ENCODE measurements at regions of chr1 and their contacts with region 1.

Region 1: GRCh38 chr1:167220537-167221125 is at the start of gene POU2F1:
- DNase-seq: peak; percentile 98
- H3K4me3 ChIP-seq: peak within 1 kb of the TSS; percentile 82
- H3K27ac ChIP-seq: peak within 1 kb of the TSS; percentile 94
- H3K4me1 ChIP-seq: peaks cover 29% of the 10 kb centered on the region
- CTCF ChIP-seq: peak; percentile 79
- total RNA-seq, gene POU2F1: 18.7 and 21.2 TPM in 2 replicates

Region 2: GRCh38 chr1:166875734-166876539 is 344.7 kb before region 1 on chr1 and contains the start of gene TADA1:
- CTCF ChIA-PET with region 1: no interaction called
- POLR2A ChIA-PET with region 1: interaction called, 5 read pairs
- intact Hi-C with region 1: loop called (anchors 2 kb)
- DNase-seq: peak; percentile 99
- H3K4me3 ChIP-seq: peak within 1 kb of the TSS; percentile 86
- H3K27ac ChIP-seq: peak within 1 kb of the TSS; percentile 69
- H3K4me1 ChIP-seq: peaks cover 17% of the 10 kb centered on the region
- CTCF ChIP-seq: no peak
- total RNA-seq, gene TADA1: 14.9 and 16.9 TPM in 2 replicates

Region 3: DNA sequence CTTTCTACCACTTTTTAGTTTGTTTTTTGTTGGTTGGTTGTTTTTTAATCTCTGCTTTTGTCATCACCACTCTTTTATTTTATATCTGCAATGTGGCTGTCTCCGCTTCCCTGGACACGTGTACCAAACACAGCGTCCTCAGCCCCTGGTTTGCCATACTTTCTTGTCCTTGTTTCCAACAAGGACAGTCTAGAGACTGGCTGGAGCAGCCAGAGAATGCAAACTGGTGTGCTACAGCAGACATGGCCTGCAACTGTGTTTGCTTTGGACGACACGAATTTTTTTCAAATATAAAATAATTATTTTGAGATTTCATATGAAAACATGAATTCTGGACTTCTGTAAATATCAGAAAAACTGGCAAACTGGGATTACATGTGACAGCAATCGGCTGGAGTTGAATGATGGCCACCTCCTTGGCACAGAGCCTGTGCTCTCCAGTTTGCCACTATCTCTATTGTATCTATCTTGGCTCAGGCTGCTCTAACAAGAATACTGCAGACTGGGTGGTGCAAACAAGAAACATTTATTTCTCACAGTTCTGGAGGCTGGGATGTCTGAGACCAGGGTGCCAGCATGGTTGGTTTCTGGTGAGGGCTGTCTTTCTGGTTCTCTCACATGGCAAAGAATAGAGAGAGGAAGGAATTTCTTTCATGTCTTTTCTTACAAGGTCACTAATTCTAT is 34.5 kb before region 1 on chr1:
- CTCF ChIA-PET with region 1: no interaction called
- POLR2A ChIA-PET with region 1: no interaction called
- intact Hi-C with region 1: no loop called
- DNase-seq: no peak
- H3K4me3 ChIP-seq: no peak overlapping the region
- H3K27ac ChIP-seq: no peak overlapping the region
- H3K4me1 ChIP-seq: no peaks in the 10 kb centered on the region
- CTCF ChIP-seq: no peak

Region 4: GRCh38 chr1:167314671-167315070 is 94.0 kb after region 1 on chr1:
- CTCF ChIA-PET with region 1: no interaction called
- POLR2A ChIA-PET with region 1: no interaction called
- intact Hi-C with region 1: no loop called
- DNase-seq: no peak
- H3K4me3 ChIP-seq: no peak overlapping the region
- H3K27ac ChIP-seq: no peak overlapping the region
- H3K4me1 ChIP-seq: no peaks in the 10 kb centered on the region
- CTCF ChIP-seq: no peak

Region 5: DNA sequence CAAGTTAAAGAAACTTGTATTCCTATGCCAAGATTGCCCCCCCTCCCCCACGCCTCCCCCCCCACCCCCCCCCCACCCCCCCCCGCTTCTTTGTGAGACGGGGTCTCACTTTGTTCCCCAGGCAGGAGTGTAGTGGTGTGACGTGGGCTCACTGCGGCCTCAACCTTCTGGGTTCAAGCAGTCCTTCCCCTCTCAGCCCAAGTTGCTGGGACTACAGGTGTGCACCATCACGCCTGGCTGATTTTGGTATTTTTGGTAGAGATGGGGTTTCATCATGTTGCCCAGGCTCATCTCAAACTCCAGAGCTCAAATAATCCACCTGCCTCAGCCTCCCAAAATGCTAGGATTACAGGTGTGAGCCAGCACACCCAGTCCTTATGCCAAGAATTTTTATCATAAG is 136.7 kb after region 1 on chr1:
- CTCF ChIA-PET with region 1: interaction called, 3 read pairs
- POLR2A ChIA-PET with region 1: interaction called, 3 read pairs
- intact Hi-C with region 1: loop called (anchors 2 kb)
- DNase-seq: peak; percentile 95
- H3K4me3 ChIP-seq: peak overlapping the region; percentile 57
- H3K27ac ChIP-seq: peak overlapping the region; percentile 100
- H3K4me1 ChIP-seq: peaks cover 83% of the 10 kb centered on the region
- CTCF ChIP-seq: no peak

Region 6: GRCh38 chr1:167542109-167543032 is 321.7 kb after region 1 on chr1:
- CTCF ChIA-PET with region 1: no interaction called
- POLR2A ChIA-PET with region 1: interaction called, 6 read pairs
- intact Hi-C with region 1: loop called (anchors 5 kb)
- DNase-seq: peak; percentile 45
- H3K4me3 ChIP-seq: peak overlapping the region; percentile 39
- H3K27ac ChIP-seq: peak overlapping the region; percentile 76
- H3K4me1 ChIP-seq: peaks cover 80% of the 10 kb centered on the region
- CTCF ChIP-seq: no peak

Region 7: DNA sequence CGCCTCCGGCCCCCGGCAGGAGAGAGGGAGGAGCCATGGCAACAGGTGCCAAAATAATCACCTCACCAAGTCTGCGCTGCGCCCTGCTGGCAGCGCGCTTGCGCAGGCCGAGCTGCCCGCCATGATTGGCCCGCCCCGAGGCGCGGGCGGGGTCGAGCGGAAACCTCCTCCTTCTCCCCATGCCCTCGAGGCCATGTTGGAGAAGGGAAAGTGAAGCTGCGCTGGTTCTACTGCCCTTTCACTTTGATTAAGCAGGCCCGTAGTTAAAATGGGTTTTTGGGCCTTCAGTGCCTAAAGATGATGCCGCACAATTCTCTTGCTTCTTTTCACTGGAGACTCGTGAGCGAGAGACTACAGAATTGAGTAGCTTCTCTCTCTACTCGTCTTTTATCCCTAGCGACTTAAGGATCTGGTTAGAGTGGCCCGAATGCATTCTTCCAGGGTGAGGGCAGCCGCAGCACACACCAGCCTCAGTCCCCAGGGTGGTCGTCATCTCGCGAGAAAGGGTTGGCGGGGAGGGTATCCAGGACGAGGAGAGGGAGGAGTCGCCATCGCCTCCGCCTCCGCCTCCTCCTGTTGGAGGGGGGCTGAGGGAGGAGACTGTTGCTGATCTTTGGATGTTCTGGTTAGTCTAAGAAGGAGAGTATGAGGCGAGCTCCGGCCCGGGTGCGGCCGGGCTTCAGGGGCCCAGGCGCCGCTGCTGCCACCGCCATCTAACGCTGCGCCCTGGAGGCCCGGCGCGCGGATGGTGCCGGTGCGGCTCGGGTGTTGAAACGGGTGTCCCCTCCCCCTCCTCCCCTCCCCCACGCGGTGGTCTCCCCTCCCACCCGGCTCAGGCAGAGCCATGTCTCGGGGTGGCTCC is 715.7 kb after region 1 on chr1 and contains the start of gene DCAF6:
- CTCF ChIA-PET with region 1: no interaction called
- POLR2A ChIA-PET with region 1: interaction called, 3 read pairs
- intact Hi-C with region 1: loop called (anchors 5 kb)
- DNase-seq: peak; percentile 99
- H3K4me3 ChIP-seq: peak within 1 kb of the TSS; percentile 90
- H3K27ac ChIP-seq: peak within 1 kb of the TSS; percentile 89
- H3K4me1 ChIP-seq: peaks cover 22% of the 10 kb centered on the region
- CTCF ChIP-seq: no peak
- total RNA-seq, gene DCAF6: 23.2 and 25.4 TPM in 2 replicates